GM10248 (cell line): ENCODE measurements at regions of chr3 and their contacts with region 1.

Region 1: GRCh38 chr3:124995460-124995994 is 60.3 kb downstream of the HEG1 start:
- DNase-seq: peak; percentile 75
- CTCF ChIP-seq: peak; percentile 77

Region 2: DNA sequence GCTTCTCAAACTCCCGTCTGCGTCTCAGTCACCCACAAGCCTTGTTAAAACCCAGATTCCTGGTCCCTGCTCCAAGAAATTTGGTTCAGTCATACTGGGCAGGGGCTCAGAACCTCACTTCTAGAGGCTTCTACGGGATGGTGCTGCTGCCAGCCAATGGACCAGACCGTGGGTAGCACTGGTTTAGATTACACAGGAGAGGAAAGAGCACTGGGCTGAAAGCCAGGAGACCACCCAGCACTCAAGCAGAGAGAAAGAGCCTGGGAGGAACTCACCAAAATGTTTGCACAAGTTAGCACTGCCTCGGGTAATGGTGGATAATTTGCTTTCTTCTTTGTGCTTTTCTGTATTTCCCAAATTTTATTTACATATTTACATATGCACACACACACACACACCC is 14.1 kb before region 1 on chr3:
- CTCF ChIA-PET with region 1: interaction called, 12 read pairs
- POLR2A ChIA-PET with region 1: no interaction called
- DNase-seq: no peak
- CTCF ChIP-seq: no peak

Region 3: GRCh38 chr3:125282659-125283058 is 287.1 kb after region 1 on chr3:
- CTCF ChIA-PET with region 1: no interaction called
- POLR2A ChIA-PET with region 1: no interaction called
- DNase-seq: no peak
- CTCF ChIP-seq: no peak

Region 4: DNA sequence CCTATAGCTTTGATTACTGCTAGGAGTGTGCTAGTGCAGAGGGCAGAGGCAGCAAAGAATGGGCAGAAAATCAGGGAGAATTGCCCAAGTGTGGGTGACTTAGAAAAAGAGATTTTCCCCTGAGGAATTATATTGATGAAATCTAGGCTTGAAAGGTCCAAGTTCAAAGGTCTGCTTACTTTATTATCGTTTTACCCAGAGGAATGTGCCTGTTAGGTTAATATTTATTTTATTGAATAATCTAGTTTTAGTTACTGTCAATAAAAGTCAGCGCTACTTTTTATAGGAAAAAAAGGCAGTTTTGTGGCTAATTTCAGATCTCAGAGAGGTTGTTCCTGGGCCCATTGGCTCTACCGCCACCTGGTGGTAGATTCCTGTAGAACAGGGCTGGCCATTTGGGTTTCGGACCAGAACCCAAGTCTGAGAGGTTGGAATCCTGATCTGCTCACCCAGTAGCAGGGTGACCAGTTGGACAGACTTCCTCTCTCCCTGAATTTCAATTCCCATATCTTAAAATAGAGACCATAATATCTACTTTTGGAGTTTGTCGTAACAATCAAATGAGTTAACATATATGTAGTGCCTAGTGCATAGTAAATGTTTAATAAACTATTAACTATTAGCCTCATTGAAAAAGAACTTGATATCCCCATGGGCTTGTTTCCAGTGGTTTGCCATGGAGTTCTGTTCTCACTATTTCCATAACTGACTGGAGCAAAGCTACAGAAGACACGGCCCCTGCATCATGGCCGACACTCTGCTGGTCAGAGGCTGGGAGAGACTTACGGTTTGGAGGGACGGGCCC is 442.3 kb after region 1 on chr3:
- CTCF ChIA-PET with region 1: interaction called, 17 read pairs
- POLR2A ChIA-PET with region 1: no interaction called
- DNase-seq: peak; percentile 58
- CTCF ChIP-seq: peak; percentile 82